Calu3 (cell line): ENCODE measurements at regions of chr6 and their contacts with region 1.

Region 1: DNA sequence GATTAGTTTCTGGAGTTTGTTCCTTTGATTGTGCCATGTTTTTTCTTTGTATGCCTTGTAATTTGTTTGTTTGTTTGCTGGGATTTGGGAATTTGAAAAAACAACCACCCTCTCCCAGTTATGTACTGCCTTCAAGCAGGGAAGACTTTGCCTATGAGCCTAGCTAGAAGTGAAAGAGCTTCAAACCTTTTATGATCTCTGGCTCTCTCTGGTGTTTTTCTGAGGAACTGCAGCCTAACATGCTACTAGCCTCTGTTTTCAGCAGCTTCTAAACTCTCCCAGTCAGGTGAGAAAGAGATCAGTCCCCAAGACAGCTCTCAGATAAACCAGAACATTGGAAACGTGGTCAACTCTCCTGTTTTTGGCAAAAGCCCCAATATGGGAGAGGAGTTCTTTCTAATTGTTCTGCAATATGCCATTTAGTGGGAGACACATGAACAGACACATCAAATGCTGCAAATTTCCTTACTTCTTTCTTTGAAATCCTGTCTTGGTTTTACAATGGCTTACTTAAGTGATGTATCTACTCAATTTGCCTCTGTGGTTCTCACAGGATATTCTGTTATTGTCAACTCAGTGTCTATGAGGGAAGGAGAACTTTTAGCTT is 58.9 kb upstream of the SERINC1 start:
- DNase-seq: peak; percentile 64
- H3K4me3 Mint-ChIP-seq: no peak overlapping the region
- H3K27ac Mint-ChIP-seq: no peak overlapping the region
- H3K4me1 Mint-ChIP-seq: no peaks in the 10 kb centered on the region
- H3K27me3 Mint-ChIP-seq: peaks cover 14% of the 10 kb centered on the region
- CTCF ChIP-seq: peak; percentile 69

Region 2: GRCh38 chr6:122381497-122382265 is 148.9 kb before region 1 on chr6:
- CTCF ChIA-PET with region 1: interaction called, 12 read pairs
- intact Hi-C with region 1: loop called (anchors 1 kb)
- DNase-seq: peak; percentile 55
- H3K4me3 Mint-ChIP-seq: no peak overlapping the region
- H3K27ac Mint-ChIP-seq: no peak overlapping the region
- H3K4me1 Mint-ChIP-seq: peaks cover 11% of the 10 kb centered on the region
- H3K27me3 Mint-ChIP-seq: peaks cover 18% of the 10 kb centered on the region
- CTCF ChIP-seq: peak; percentile 73

Region 3: DNA sequence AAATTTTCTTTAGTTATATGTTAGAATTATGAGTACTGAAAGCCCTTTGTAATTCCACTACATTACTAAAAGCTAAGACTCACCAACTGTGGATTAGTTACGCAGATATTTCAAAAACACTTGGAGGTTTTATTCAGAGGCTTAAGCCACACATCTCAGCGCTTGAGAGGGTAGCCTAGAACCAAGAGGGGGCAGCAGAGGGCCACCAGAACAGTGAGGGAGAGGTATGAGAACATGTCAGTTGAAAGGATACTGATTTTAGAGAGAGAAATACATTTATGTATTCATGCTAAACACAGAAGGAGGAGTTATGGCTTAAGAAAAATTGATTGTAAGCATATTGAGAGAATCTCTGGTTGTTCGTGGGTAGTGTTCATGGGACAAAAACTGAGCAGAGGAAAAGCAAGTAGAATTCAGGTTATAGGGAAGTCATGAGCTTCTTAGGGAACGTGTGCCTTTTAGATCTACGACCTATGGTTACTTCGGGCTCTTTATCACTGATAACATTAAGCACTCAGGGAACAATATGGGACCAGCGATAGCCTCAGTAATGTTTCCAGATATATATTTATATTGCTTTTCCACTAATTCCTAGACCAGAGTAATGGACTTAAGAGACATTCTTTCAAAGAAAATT is 38.5 kb before region 1 on chr6:
- CTCF ChIA-PET with region 1: interaction called, 86 read pairs
- intact Hi-C with region 1: loop called (anchors 1 kb)
- DNase-seq: peak; percentile 81
- H3K4me3 Mint-ChIP-seq: no peak overlapping the region
- H3K27ac Mint-ChIP-seq: no peak overlapping the region
- H3K4me1 Mint-ChIP-seq: peaks cover 23% of the 10 kb centered on the region
- H3K27me3 Mint-ChIP-seq: no peaks in the 10 kb centered on the region
- CTCF ChIP-seq: peak; percentile 79

Region 4: GRCh38 chr6:122511193-122511924 is 19.2 kb before region 1 on chr6:
- CTCF ChIA-PET with region 1: no interaction called
- intact Hi-C with region 1: no loop called
- DNase-seq: no peak
- H3K4me3 Mint-ChIP-seq: no peak overlapping the region
- H3K27ac Mint-ChIP-seq: no peak overlapping the region
- H3K4me1 Mint-ChIP-seq: no peaks in the 10 kb centered on the region
- H3K27me3 Mint-ChIP-seq: no peaks in the 10 kb centered on the region
- CTCF ChIP-seq: no peak

Region 5: GRCh38 chr6:122709922-122710512 is 179.5 kb after region 1 on chr6:
- CTCF ChIA-PET with region 1: no interaction called
- intact Hi-C with region 1: no loop called
- DNase-seq: no peak
- H3K4me3 Mint-ChIP-seq: no peak overlapping the region
- H3K27ac Mint-ChIP-seq: no peak overlapping the region
- H3K4me1 Mint-ChIP-seq: peaks cover 17% of the 10 kb centered on the region
- H3K27me3 Mint-ChIP-seq: no peaks in the 10 kb centered on the region
- CTCF ChIP-seq: no peak